Heart right ventricle (tissue), 16 donors: ENCODE measurements at regions of chr4 and their contacts with region 1.

Region 1: DNA sequence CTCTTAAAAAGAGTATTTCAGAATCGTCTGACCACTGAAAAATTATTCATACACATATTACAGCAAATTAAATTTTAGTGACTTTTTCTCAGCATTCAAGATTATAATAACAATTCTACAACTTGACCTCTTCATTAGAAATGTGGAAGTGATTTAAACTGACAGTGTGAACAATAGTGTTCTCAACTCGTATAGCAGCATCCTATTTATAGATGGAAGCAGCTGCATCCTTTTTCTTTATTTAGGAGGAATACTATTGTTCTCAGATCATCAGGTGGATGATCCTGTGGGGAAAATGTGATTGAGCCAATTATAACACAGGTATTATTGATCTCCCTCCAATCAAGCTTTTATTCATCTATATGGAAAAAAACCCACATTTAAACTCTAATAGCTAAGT is 56.7 kb downstream of the RAPGEF2 start:
- DNase-seq: no peak
- ATAC-seq: peak in 2 of 8 donors; percentile 38 to 54
- H3K4me3 ChIP-seq: no peak overlapping the region
- H3K27ac ChIP-seq: peak overlapping the region in 1 of 10 donors; percentile 9
- H3K4me1 ChIP-seq: peaks cover 0 to 98% (median 56%) of the 10 kb centered on the region in 9 donors
- H3K27me3 ChIP-seq: no peaks in the 10 kb centered on the region
- CTCF ChIP-seq: no peak

Region 2: GRCh38 chr4:159121371-159121770 is 38.2 kb before region 1 on chr4:
- intact Hi-C with region 1: loop called in 1 of 10 experiments (anchors 5 kb)
- DNase-seq: no peak
- ATAC-seq: no peak
- H3K4me3 ChIP-seq: no peak overlapping the region
- H3K27ac ChIP-seq: no peak overlapping the region
- H3K4me1 ChIP-seq: peaks cover 0 to 81% (median 34%) of the 10 kb centered on the region in 9 donors
- H3K27me3 ChIP-seq: no peaks in the 10 kb centered on the region
- CTCF ChIP-seq: no peak